ENCODE measurements at regions of chr16 and their contacts with region 1.

Region 1: GRCh38 chr16:81798311-81799137 is 19.4 kb downstream of the PLCG2 start:
- DNase-seq: peak; percentile 33 to 69 (median 39)
- H3K4me3 ChIP-seq: peak overlapping the region in 1 of 3 experiments; percentile 64
- H3K4me3 Mint-ChIP-seq: peak overlapping the region; percentile 48 to 67
- H3K27ac ChIP-seq: peak overlapping the region; percentile 95 to 98
- H3K27ac Mint-ChIP-seq: peak overlapping the region; percentile 89 to 97 (median 94)
- H3K4me1 ChIP-seq: peaks cover 48 to 55% of the 10 kb centered on the region in 2 donors
- H3K4me1 Mint-ChIP-seq: peaks cover 61% of the 10 kb centered on the region
- H3K27me3 ChIP-seq: no peaks in the 10 kb centered on the region
- H3K27me3 Mint-ChIP-seq: peaks cover 0 to 2% (median 0%) of the 10 kb centered on the region in 3 donors
- CTCF ChIP-seq: no peak

Region 2: DNA sequence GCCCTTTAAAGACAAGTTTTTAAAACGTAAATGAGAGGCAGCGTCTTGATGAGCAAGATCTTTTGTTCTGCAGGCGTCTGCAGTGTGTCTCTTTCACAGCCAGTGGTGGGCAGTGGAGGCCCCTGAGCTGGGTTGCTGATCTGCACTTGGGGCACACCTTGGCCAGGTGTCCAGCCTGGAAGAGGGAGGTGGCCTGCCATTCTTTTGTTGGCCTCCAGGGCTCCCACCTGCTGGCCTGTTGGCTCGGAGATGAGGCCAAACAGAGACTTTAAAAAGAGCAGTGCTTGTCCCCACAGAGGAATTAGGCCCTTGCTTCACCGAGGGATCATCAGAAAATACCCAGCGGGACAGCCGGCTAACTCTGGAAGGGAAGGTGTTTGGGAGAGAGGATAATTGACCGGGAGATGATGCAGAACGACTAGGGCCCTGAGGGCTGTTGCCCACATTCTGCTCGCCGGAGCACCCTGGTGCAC is 165.3 kb before region 1 on chr16:
- intact Hi-C with region 1: no loop called
- DNase-seq: no peak
- H3K4me3 ChIP-seq: no peak overlapping the region
- H3K4me3 Mint-ChIP-seq: no peak overlapping the region
- H3K27ac ChIP-seq: peak overlapping the region; percentile 65 to 77
- H3K27ac Mint-ChIP-seq: peak overlapping the region in 6 of 7 donors; percentile 88 to 96 (median 92)
- H3K4me1 ChIP-seq: peaks cover 25 to 40% of the 10 kb centered on the region in 2 donors
- H3K4me1 Mint-ChIP-seq: peaks cover 75% of the 10 kb centered on the region
- H3K27me3 ChIP-seq: no peaks in the 10 kb centered on the region
- H3K27me3 Mint-ChIP-seq: peaks cover 0 to 5% (median 3%) of the 10 kb centered on the region in 3 donors
- CTCF ChIP-seq: no peak

Region 3: DNA sequence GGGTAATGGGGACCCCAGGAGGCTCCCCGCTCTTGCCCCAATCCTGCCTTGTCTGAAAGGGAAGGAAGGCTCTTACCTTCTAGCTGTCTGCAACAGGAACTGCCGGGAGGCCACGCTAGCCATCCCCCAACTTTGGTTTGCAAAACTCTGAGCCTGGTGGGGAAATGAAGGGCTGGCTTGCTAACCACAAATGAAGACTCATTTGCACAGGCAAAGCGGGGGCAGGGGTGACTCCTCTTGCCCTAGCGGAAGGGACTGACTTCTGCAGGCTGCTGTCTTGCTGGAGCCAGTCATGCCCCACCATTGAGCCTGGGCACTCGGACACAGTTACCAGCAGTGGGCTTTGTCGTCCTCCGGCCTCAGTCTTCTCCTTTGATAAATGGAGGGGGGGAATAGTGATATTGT is 33.2 kb after region 1 on chr16:
- intact Hi-C with region 1: loop called in 1 of 2 experiments (anchors 5 kb)
- DNase-seq: peak; percentile 89 to 92 (median 91)
- H3K4me3 ChIP-seq: peak overlapping the region in 1 of 3 experiments; percentile 57
- H3K4me3 Mint-ChIP-seq: peak overlapping the region; percentile 24 to 66
- H3K27ac ChIP-seq: peak overlapping the region; percentile 83 to 87
- H3K27ac Mint-ChIP-seq: peak overlapping the region; percentile 86 to 95 (median 93)
- H3K4me1 ChIP-seq: peaks cover 84 to 87% of the 10 kb centered on the region in 2 donors
- H3K4me1 Mint-ChIP-seq: peaks cover 92% of the 10 kb centered on the region
- H3K27me3 ChIP-seq: no peaks in the 10 kb centered on the region
- H3K27me3 Mint-ChIP-seq: peaks cover 0 to 3% (median 0%) of the 10 kb centered on the region in 3 donors
- CTCF ChIP-seq: peak; percentile 42

Measured in CD14-positive monocyte (primary cell).